HEK293 (cell line): ENCODE measurements at regions of chr17 and their contacts with region 1.

Region 1: DNA sequence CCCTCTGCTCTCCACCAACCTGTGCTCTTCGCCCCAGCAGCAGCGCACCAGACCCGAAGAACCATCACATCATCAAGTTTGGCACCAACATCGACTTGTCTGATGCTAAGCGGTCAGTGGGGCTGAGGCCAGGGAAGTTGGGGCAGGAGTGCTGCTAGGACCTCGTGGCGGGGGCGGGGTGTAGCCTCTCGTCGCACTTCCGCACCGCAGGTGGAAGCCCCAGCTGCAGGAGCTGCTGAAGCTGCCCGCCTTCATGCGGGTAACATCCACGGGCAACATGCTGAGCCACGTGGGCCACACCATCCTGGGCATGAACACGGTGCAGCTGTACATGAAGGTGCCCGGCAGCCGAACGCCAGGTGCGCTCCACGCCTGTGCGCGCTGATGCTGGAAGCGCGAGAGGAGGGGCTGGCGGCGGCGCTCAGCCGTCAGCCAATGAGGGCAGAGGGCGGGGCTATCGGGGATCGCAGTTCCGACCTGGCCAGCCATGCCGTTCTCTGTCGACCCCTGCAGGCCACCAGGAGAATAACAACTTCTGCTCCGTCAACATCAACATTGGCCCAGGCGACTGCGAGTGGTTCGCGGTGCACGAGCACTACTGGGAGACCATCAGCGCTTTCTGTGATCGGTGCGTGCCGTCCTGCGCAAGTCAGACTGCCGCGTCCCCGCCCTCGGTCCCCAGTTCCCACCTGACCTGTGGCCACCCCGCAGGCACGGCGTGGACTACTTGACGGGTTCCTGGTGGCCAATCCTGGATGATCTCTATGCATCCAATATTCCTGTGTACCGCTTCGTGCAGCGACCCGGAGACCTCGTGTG is 3.2 kb upstream of the TMEM88 start:
- H3K4me3 ChIP-seq: no peak overlapping the region
- H3K27ac ChIP-seq: no peak overlapping the region
- H3K4me1 ChIP-seq: peaks cover 5% of the 10 kb centered on the region; the same call in 1 of the 2 replicates
- CTCF ChIP-seq: peak; percentile 53

Region 2: GRCh38 chr17:7818746-7819645 is 32.7 kb before region 1 on chr17:
- CTCF ChIA-PET with region 1: interaction called, 22 read pairs
- POLR2A ChIA-PET with region 1: interaction called, 10 read pairs
- H3K4me3 ChIP-seq: no peak overlapping the region
- H3K27ac ChIP-seq: no peak overlapping the region
- H3K4me1 ChIP-seq: no peaks in the 10 kb centered on the region
- CTCF ChIP-seq: no peak

Region 3: GRCh38 chr17:7825206-7825990 is 26.2 kb before region 1 on chr17:
- CTCF ChIA-PET with region 1: interaction called, 22 read pairs
- POLR2A ChIA-PET with region 1: interaction called, 42 read pairs
- H3K4me3 ChIP-seq: no peak overlapping the region
- H3K27ac ChIP-seq: no peak overlapping the region
- H3K4me1 ChIP-seq: no peaks in the 10 kb centered on the region
- CTCF ChIP-seq: peak; percentile 73; the same call in 1 of the 2 replicates

Region 4: GRCh38 chr17:7834962-7835813 is 16.5 kb before region 1 on chr17:
- CTCF ChIA-PET with region 1: interaction called, 13 read pairs
- POLR2A ChIA-PET with region 1: interaction called, 110 read pairs
- H3K4me3 ChIP-seq: peak overlapping the region; percentile 60
- H3K27ac ChIP-seq: peak overlapping the region; percentile 100
- H3K4me1 ChIP-seq: peaks cover 22% of the 10 kb centered on the region
- CTCF ChIP-seq: peak; percentile 97